ENCODE measurements at regions of chr15 and their contacts with region 1.

Region 1: DNA sequence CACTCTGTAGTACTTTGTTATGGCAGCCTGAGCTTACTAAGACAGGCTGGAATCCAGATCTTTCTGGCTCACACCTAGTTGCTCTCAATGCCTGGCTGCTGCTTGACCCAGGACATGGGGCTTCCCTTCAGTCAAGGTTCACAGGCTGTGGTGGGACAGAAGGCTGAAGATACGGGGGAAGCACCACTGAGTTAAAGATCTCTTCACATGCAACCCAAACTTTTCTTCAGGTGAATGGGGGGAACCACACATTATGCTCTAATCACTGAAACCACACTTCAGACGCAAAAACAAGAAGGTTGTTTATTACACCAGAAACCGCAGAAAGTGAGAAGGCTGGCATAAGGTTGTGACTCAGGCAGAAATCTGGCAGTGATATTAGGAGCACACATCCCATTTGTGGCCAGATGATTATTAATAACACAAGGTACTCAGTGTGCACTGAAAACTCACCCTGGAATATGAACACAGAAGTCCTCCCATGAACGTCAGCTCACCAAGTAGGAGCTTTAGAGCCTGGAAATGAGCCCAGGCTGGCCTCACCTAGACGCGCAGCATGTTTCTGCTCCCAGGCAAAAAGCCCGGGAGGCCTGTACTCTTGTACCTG is 230.5 kb upstream of the CHRNA7 start:
- DNase-seq: peak; percentile 60
- ATAC-seq: peak; percentile 95

Region 2: GRCh38 chr15:31752065-31752762 is 47.6 kb before region 1 on chr15:
- intact Hi-C with region 1: loop called (anchors 5 kb)
- DNase-seq: no peak
- ATAC-seq: no peak

Region 3: GRCh38 chr15:31776039-31776438 is 23.8 kb before region 1 on chr15:
- intact Hi-C with region 1: loop called (anchors 2 kb)
- DNase-seq: no peak
- ATAC-seq: no peak

Region 4: GRCh38 chr15:31857194-31857593 is 57.4 kb after region 1 on chr15:
- intact Hi-C with region 1: no loop called
- DNase-seq: no peak
- ATAC-seq: no peak

Measured in left ventricle myocardium superior (tissue), 1 donor.